WTC11 (cell line): ENCODE measurements at regions of chr2 and their contacts with region 1.

Region 1: GRCh38 chr2:159921752-159922404 is 123.9 kb upstream of the CD302 start:
- DNase-seq: peak; percentile 94
- ATAC-seq: peak; percentile 98
- H3K4me3 Mint-ChIP-seq: peak overlapping the region; percentile 20
- H3K27ac Mint-ChIP-seq: no peak overlapping the region
- H3K4me1 Mint-ChIP-seq: peaks cover 15% of the 10 kb centered on the region
- H3K27me3 Mint-ChIP-seq: peaks cover 12% of the 10 kb centered on the region
- CTCF ChIP-seq: peak; percentile 73

Region 2: GRCh38 chr2:159849160-159849813 is 72.6 kb before region 1 on chr2:
- CTCF ChIA-PET with region 1: interaction called, 10 read pairs
- POLR2A ChIA-PET with region 1: no interaction called
- DNase-seq: no peak
- ATAC-seq: no peak
- H3K4me3 Mint-ChIP-seq: no peak overlapping the region
- H3K27ac Mint-ChIP-seq: no peak overlapping the region
- H3K4me1 Mint-ChIP-seq: no peaks in the 10 kb centered on the region
- H3K27me3 Mint-ChIP-seq: no peaks in the 10 kb centered on the region
- CTCF ChIP-seq: no peak

Region 3: GRCh38 chr2:159895258-159896065 is 26.4 kb before region 1 on chr2:
- CTCF ChIA-PET with region 1: interaction called, 16 read pairs
- POLR2A ChIA-PET with region 1: no interaction called
- DNase-seq: no peak
- ATAC-seq: no peak
- H3K4me3 Mint-ChIP-seq: no peak overlapping the region
- H3K27ac Mint-ChIP-seq: no peak overlapping the region
- H3K4me1 Mint-ChIP-seq: peaks cover 11% of the 10 kb centered on the region
- H3K27me3 Mint-ChIP-seq: peaks cover 3% of the 10 kb centered on the region; the same call in 1 of the 2 replicates
- CTCF ChIP-seq: no peak

Region 4: DNA sequence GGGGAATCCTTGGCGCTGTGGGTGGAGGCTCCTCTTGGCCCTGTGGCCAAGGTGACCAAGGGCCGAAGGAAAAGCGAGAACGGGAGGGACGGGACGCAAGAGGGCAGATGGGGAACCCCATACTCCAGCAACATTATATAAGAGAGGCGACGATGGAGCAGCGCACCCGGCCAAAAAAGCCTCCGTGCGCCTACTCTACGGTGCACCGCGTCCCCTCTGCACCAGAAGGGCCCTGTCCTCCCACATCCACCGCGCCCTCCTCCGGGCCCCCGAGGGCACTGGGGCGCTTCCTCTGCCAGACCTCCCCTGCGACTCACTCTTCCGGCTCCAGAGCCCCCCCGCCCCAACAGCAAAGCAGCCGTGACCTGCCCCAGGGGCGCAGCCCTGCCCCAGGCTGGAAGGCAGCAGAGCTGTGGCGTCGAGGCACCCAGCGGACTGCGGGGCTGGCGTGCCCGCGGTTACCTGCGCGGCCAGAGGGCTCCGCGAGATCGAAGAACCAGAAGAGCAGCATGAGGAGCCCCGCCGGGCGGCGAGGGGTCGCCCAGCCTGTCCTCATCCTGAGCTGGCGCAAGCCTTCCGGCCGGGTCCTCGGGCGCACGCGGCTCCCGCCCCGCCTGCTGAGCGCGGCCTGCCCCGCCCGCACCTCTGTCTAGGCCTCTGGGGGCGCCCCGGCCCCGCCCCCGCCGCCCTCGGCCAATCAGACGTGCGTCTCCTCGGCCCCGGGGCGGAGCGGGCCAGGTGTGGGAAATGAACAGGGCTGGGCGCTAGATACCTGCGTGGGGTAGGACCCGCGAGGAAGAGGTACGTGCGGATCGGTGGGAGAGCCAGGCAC is 17.5 kb before region 1 on chr2:
- CTCF ChIA-PET with region 1: interaction called, 21 read pairs
- POLR2A ChIA-PET with region 1: no interaction called
- DNase-seq: peak; percentile 86
- ATAC-seq: peak; percentile 91
- H3K4me3 Mint-ChIP-seq: peak within 1 kb of the TSS; percentile 76
- H3K27ac Mint-ChIP-seq: no peak within 1 kb of the TSS
- H3K4me1 Mint-ChIP-seq: peaks cover 4% of the 10 kb centered on the region
- H3K27me3 Mint-ChIP-seq: peaks cover 65% of the 10 kb centered on the region
- CTCF ChIP-seq: no peak

Region 5: DNA sequence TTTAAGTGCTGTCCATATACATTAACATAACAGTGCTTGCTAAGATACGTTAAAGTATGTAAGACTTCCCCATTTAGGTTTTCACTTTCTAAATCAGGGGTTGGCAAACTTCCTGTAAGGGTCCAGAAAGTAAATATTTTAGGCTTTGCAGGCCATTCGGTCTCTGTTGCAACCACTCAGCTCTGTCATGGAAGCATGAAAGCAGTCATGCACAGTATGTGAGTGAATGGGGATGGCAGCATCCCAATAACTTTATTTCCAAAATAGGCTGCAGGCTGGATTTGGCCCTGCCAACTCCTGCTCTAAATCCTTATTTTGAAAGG is 11.8 kb after region 1 on chr2:
- CTCF ChIA-PET with region 1: interaction called, 14 read pairs
- POLR2A ChIA-PET with region 1: no interaction called
- DNase-seq: no peak
- ATAC-seq: no peak
- H3K4me3 Mint-ChIP-seq: no peak overlapping the region
- H3K27ac Mint-ChIP-seq: no peak overlapping the region
- H3K4me1 Mint-ChIP-seq: no peaks in the 10 kb centered on the region
- H3K27me3 Mint-ChIP-seq: no peaks in the 10 kb centered on the region
- CTCF ChIP-seq: no peak

Region 6: GRCh38 chr2:160870729-160871465 is 949.0 kb after region 1 on chr2:
- CTCF ChIA-PET with region 1: no interaction called
- POLR2A ChIA-PET with region 1: no interaction called
- DNase-seq: no peak
- ATAC-seq: no peak
- H3K4me3 Mint-ChIP-seq: no peak overlapping the region
- H3K27ac Mint-ChIP-seq: no peak overlapping the region
- H3K4me1 Mint-ChIP-seq: peaks cover 4% of the 10 kb centered on the region; the same call in 1 of the 2 replicates
- H3K27me3 Mint-ChIP-seq: no peaks in the 10 kb centered on the region
- CTCF ChIP-seq: no peak